OCI-LY7 (cell line): ENCODE measurements at regions of chr15 and their contacts with region 1.

Region 1: DNA sequence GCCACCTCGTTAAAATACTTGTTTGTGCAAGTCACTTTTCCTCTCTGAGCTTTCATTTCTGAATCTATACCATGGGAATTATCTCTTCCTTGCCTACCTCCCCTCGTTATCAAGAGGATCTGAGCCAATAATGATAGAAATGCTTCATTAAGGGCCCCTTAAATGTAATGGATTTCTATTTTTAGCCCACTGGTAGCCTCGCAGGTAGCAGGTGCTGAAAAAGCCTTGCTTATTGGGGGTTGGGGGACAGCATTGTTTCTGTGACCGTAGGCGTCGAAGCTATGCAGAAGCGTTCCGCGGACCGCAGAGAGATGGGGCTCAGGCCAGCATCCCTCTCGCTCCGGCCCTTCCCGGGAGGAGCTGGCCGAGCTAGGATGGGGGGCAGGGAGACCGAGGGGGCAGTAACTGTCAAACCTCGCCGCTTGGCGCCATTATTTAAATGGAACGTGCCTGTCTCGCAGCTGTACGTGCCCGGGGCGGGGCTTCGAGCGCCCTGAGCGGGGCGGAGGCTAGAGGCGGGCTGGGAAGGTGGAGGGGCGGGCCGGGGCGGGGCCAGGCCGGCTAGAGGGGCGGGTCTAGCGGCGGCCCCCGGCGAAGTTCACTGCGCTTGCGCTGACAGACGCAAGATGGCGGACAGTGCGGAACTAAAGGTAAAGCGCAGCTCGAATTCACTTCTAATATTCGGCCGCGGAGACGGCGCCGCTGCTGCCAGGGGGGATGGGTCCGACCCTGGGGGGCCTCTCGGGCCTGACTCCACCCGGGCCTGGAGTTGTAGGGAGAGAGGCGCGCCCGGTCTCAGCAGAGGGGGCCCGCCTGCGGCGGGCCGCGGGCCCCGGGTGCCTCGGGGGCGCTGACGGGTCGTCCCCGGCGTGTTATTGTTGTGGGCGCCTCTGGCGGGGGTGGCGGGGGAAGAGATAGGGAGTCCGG is at the start of gene PIAS1:
- DNase-seq: peak; percentile 96
- H3K4me3 ChIP-seq: peak within 1 kb of the TSS; percentile 88
- H3K27ac ChIP-seq: peak within 1 kb of the TSS; percentile 72
- H3K4me1 ChIP-seq: peaks cover 45% of the 10 kb centered on the region
- CTCF ChIP-seq: peak; percentile 44; the same call in 1 of the 2 replicates
- total RNA-seq, gene PIAS1: 36.2 and 44.1 TPM in 2 replicates

Region 2: DNA sequence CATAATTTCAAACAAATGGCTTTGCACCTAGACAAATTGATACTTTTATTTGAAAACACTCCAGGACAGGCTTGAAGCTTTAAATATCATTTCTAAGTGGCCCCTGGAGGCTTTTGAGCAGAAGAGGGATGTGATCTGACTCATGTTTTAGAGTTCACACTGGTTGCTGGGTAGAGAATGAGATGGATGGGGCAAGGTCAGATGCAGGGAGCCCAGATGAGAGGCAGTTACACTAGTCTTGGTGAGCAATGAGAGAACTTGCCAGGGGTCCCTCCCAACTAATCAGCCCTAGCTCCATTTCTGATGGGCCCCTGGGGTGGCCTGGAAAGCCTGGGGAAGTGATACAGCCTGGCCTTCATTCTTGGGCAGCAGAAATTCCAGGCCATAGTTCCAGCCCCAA is 1990.8 kb before region 1 on chr15:
- CTCF ChIA-PET with region 1: no interaction called
- POLR2A ChIA-PET with region 1: no interaction called
- intact Hi-C with region 1: no loop called
- DNase-seq: no peak
- H3K4me3 ChIP-seq: no peak overlapping the region
- H3K27ac ChIP-seq: no peak overlapping the region
- H3K4me1 ChIP-seq: no peaks in the 10 kb centered on the region
- CTCF ChIP-seq: no peak

Region 3: GRCh38 chr15:67863442-67863987 is 190.4 kb before region 1 on chr15:
- CTCF ChIA-PET with region 1: interaction called, 5 read pairs
- POLR2A ChIA-PET with region 1: interaction called, 3 read pairs
- intact Hi-C with region 1: loop called (anchors 2 kb)
- DNase-seq: peak; percentile 89
- H3K4me3 ChIP-seq: peak overlapping the region; percentile 62
- H3K27ac ChIP-seq: peak overlapping the region; percentile 70
- H3K4me1 ChIP-seq: peaks cover 41% of the 10 kb centered on the region
- CTCF ChIP-seq: peak; percentile 89

Region 4: GRCh38 chr15:68097029-68097428 is 43.1 kb after region 1 on chr15:
- CTCF ChIA-PET with region 1: no interaction called
- POLR2A ChIA-PET with region 1: interaction called, 4 read pairs
- intact Hi-C with region 1: loop called (anchors 5 kb)
- DNase-seq: peak; percentile 51
- H3K4me3 ChIP-seq: no peak overlapping the region
- H3K27ac ChIP-seq: no peak overlapping the region
- H3K4me1 ChIP-seq: peaks cover 44% of the 10 kb centered on the region
- CTCF ChIP-seq: no peak

Region 5: DNA sequence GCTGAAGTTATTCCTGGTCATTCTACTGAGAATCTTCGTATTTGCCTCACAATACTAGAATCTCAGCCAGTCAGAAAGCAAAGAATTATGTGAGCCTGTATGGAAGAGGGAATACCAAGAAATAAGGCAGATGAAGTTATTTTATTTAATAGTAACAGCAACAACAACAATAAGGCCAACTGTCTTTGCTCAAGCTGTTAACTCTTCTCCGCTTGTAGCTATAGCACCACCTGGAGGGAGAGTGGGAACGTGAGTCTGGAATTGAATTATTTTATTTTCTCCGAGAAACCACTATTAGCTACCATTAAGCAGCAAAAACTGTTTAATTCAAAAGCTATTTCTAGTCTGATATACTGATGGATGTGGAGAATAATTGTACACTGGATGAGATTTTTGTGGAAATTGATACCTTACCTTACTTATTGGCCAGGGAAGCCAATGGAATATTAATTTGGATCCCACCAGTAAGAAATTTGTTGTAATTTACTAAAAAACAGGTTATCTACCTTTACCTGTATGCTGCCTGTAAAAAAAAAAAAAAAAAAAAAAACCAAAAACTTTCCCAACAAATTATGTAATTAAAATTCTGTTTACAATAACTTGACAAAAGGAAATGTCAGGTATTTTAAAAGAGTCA is 101.1 kb after region 1 on chr15:
- CTCF ChIA-PET with region 1: no interaction called
- POLR2A ChIA-PET with region 1: interaction called, 5 read pairs
- intact Hi-C with region 1: loop called (anchors 2 kb)
- DNase-seq: peak; percentile 72
- H3K4me3 ChIP-seq: no peak overlapping the region
- H3K27ac ChIP-seq: peak overlapping the region; percentile 16
- H3K4me1 ChIP-seq: peaks cover 8% of the 10 kb centered on the region
- CTCF ChIP-seq: peak; percentile 96

Region 6: GRCh38 chr15:68187559-68187958 is 133.6 kb after region 1 on chr15:
- CTCF ChIA-PET with region 1: no interaction called
- POLR2A ChIA-PET with region 1: interaction called, 3 read pairs
- intact Hi-C with region 1: loop called (anchors 1 kb)
- DNase-seq: peak; percentile 49
- H3K4me3 ChIP-seq: no peak overlapping the region
- H3K27ac ChIP-seq: peak overlapping the region; percentile 97
- H3K4me1 ChIP-seq: peaks cover 70% of the 10 kb centered on the region
- CTCF ChIP-seq: no peak

Region 7: DNA sequence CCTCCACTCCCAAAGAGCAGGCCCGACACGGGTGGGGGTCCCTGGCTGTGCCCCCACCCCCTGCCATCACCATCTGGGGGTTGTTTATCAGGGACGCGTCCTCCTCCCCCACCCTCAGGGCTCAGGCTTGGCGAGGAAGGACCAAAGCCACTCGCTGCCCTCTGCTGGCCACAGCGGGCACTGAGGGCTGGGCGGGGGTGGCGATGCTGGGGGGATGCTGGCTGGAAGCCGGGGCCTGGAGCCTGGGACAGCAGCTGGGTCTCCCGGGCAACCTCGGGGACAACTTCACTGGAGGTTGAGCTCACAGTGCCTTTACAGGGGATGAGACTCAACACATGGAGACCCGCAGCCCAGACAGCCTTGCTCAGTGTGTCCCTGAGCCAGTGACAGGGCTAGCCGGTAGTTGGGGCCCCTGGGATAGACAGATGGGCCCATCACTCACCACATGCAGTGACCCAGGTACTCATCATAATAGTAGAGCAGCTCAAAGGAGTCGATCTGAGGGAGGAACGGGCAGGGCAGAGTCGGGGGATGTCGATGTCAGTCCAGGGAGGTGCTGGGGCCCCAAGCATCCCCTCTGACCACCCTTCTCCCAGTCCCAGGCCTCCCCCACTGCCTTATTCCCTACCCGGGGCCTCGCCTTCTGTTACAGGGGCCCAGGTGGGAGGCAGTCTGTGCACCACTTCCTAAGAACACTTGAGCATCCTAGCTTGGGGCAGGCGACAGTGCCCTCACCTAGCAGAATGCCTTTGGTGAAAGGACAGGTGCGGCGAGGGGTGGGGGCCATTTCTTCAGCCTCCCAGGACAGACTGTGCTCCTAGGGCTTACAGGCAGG is 157.1 kb after region 1 on chr15:
- CTCF ChIA-PET with region 1: no interaction called
- POLR2A ChIA-PET with region 1: no interaction called
- intact Hi-C with region 1: loop called (anchors 1 kb)
- DNase-seq: peak; percentile 73
- H3K4me3 ChIP-seq: no peak overlapping the region
- H3K27ac ChIP-seq: peak overlapping the region; percentile 85
- H3K4me1 ChIP-seq: peaks cover 60% of the 10 kb centered on the region
- CTCF ChIP-seq: peak; percentile 80

Region 8: GRCh38 chr15:68229386-68230156 is 175.6 kb after region 1 on chr15 and contains the start of gene CLN6:
- CTCF ChIA-PET with region 1: no interaction called
- POLR2A ChIA-PET with region 1: no interaction called
- intact Hi-C with region 1: loop called (anchors 2 kb)
- DNase-seq: peak; percentile 92
- H3K4me3 ChIP-seq: peak within 1 kb of the TSS; percentile 80
- H3K27ac ChIP-seq: peak within 1 kb of the TSS; percentile 80
- H3K4me1 ChIP-seq: peaks cover 49% of the 10 kb centered on the region
- CTCF ChIP-seq: no peak; the same call in 1 of the 2 replicates
- total RNA-seq, gene CLN6: 50.3 and 60.2 TPM in 2 replicates